Mammary epithelial cell (primary cell): ENCODE measurements at regions of chr3 and their contacts with region 1.

Region 1: GRCh38 chr3:71069797-71070196 is 513.7 kb downstream of the FOXP1 start:
- DNase-seq: peak; percentile 96
- H3K4me3 ChIP-seq: no peak overlapping the region
- H3K27ac ChIP-seq: peak overlapping the region; percentile 70
- H3K4me1 ChIP-seq: peaks cover 58% of the 10 kb centered on the region
- H3K27me3 ChIP-seq: no peaks in the 10 kb centered on the region
- CTCF ChIP-seq: peak; percentile 73 to 81

Region 2: DNA sequence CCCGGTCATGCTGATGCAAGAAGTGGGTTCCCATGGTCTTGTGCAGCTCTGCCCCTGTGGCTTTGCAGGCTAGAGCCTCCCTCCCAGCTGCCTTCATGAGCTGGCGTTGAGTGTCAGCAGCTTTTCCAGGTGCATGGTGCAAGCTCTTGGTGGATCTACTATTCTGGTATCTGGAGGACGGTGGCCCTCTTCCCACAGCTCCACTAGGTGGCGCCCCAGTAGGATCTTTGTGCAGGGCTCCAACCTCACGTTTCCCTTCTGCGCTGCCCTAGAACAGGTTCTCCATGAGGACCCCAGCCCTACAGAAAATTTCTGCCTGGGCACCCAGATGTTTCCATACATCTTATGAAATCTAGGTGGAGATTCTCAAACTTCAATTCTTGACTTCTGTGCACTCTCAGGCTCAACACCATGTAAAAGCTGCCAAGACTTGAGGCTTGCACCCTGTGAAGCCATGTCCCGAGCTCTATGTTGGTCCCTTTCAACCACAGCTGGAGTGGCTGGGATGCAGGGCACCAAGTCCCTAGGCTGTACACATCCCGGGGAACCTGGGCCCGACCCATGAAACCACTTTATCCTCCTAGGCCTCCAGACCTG is 519.0 kb before region 1 on chr3:
- CTCF ChIA-PET with region 1: interaction called, 3 read pairs
- dilution Hi-C with region 1: no loop called
- in situ Hi-C with region 1: no loop called
- intact Hi-C with region 1: loop called (anchors 1 kb)
- DNase-seq: peak; percentile 45
- H3K4me3 ChIP-seq: no peak overlapping the region
- H3K27ac ChIP-seq: no peak overlapping the region
- H3K4me1 ChIP-seq: no peaks in the 10 kb centered on the region
- H3K27me3 ChIP-seq: peaks cover 2% of the 10 kb centered on the region
- CTCF ChIP-seq: peak; percentile 57 to 82

Region 3: DNA sequence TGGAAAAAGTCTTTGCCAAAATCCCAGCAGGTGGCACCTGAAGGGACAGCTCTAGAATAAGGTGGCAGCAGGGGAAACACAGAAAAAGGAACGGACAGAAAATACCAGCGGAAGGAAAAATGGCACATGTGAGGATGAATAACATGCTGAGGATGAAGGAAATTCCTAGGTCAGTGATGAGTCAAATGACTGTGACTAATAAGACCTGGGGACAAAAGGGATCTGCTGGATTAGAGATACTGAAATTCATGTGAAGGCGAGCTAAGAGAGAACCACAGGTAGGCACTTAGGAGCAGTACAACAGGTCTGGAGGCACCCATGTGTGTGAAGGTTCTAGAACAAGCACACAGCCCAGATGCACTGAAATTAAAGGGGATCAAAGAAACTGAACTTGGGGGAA is 31.2 kb after region 1 on chr3:
- CTCF ChIA-PET with region 1: no interaction called
- dilution Hi-C with region 1: no loop called
- in situ Hi-C with region 1: no loop called
- intact Hi-C with region 1: loop called (anchors 2 kb)
- DNase-seq: peak; percentile 88
- H3K4me3 ChIP-seq: no peak overlapping the region
- H3K27ac ChIP-seq: no peak overlapping the region
- H3K4me1 ChIP-seq: peaks cover 21% of the 10 kb centered on the region
- H3K27me3 ChIP-seq: no peaks in the 10 kb centered on the region
- CTCF ChIP-seq: no peak

Region 4: DNA sequence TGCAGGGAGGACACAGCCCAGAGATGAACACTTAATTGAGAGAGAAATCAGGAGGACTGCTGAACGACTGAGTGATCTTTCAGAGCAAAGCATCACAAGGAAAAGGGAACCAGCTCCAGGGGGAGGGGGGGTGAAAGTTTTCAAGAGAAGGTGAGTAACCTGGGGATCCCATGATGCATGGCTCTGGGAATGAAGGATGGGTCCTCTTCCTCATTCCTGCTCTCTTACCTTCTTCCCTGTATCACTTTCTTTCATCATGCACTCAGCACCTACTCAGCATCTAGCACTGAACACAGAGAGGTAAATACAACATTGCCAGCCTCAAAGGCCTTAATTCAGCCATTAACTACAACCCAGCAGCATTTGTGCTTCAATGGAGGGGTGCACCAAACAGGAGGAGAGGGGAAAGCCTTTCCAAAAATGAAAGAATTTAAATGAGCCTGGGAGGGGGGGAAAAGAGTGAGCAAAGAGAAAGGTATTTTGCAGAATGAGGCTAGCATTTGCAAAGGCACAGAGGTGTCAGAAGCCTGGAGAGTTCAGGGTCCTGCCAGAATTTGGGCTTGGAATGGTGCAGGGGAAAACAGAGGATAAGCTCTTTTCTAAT is 86.4 kb after region 1 on chr3:
- CTCF ChIA-PET with region 1: no interaction called
- dilution Hi-C with region 1: no loop called
- in situ Hi-C with region 1: no loop called
- intact Hi-C with region 1: loop called (anchors 1 kb)
- DNase-seq: peak; percentile 64
- H3K4me3 ChIP-seq: no peak overlapping the region
- H3K27ac ChIP-seq: no peak overlapping the region
- H3K4me1 ChIP-seq: peaks cover 9% of the 10 kb centered on the region
- H3K27me3 ChIP-seq: no peaks in the 10 kb centered on the region
- CTCF ChIP-seq: no peak

Region 5: GRCh38 chr3:71305231-71306206 is 235.7 kb after region 1 on chr3:
- CTCF ChIA-PET with region 1: no interaction called
- dilution Hi-C with region 1: no loop called
- in situ Hi-C with region 1: no loop called
- intact Hi-C with region 1: loop called (anchors 1 kb)
- DNase-seq: peak; percentile 39
- H3K4me3 ChIP-seq: peak overlapping the region; percentile 31 to 51 (median 40)
- H3K27ac ChIP-seq: peak overlapping the region; percentile 25
- H3K4me1 ChIP-seq: peaks cover 10% of the 10 kb centered on the region
- H3K27me3 ChIP-seq: no peaks in the 10 kb centered on the region
- CTCF ChIP-seq: no peak

Region 6: DNA sequence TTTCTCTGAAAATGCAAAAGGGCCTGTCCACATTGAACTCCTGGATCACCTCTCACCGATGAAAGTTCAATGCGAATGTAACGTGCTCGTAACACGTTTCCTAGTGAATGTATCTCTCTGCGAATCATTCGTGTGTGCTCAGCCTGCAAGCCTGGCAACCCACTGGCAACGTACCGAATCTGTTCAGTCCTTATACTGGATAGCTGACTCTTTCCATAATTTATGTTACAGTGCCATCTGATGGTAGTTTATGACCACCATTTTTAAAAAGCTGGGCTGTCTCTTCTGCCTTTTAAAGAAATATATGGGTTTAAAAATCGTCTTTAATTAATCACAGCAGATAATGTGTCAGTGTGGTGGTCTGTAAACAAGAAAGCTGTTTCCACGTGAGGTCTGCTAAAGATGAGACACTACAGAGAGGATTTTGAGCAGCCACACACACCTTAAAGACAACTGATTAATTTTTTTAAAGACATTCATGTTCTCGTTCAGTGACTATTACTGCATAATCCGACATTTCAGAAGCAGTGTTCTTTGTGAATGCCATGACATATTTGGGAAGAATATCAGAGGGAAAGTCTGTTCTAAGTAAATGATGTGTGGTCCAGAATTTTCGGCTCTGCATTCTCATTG is 583.1 kb after region 1 on chr3:
- CTCF ChIA-PET with region 1: no interaction called
- dilution Hi-C with region 1: no loop called
- in situ Hi-C with region 1: no loop called
- intact Hi-C with region 1: loop called (anchors 5 kb)
- DNase-seq: peak; percentile 29
- H3K4me3 ChIP-seq: no peak overlapping the region
- H3K27ac ChIP-seq: no peak overlapping the region
- H3K4me1 ChIP-seq: peaks cover 6% of the 10 kb centered on the region
- H3K27me3 ChIP-seq: no peaks in the 10 kb centered on the region
- CTCF ChIP-seq: peak; percentile 52 to 55